Heart right ventricle (tissue), 16 donors: ENCODE measurements at regions of chr20 and their contacts with region 1.

Region 1: DNA sequence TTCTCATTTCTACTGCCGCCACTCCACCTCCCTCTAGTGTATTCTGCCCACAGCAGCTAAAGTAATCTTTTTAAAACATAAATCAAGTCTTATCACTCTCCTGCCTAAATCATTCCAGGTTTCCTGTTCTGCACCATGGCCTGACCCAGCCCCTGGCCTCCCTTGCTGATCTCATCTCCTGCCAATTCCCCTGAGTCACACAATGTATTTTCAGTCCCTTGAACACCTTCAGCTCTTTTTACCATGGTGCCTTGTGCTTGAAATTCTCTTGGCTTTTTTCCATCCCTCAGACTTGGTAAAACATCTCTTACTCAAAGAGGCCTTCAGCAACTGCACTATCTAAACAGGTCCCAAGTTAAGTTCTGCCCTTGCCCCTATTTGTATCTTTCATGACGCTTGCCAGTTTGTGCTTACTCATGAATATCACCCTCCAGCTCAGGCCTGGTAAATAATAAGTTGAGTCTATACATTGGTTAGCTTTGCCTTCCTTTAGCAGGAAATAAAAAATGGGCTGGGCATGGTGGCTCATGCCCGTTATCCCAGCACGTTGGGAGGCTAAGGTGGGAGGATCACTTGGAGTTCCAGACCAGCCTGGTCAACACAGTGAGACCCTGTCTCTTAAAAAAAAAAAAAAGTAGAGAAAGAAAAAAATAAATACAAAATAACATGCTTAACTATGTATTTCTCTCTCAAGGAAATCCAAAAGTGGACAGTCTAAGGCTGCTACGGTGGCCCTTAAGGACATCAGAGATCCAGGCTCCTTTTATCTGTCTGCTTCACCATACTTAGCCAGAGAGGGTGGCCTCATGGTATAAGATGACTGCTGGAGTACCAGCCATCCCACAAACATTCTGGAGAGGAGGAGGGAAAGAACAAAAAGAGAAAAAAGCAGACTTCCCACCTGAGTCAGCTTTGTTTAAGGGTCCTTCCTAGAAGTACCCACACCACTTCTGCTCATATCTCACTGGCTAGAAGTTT is 62.2 kb downstream of the ARFGEF2 start:
- DNase-seq: peak; percentile 20 to 41
- ATAC-seq: peak; percentile 82 to 98 (median 96)
- H3K4me3 ChIP-seq: no peak overlapping the region
- H3K27ac ChIP-seq: peak overlapping the region in 9 of 10 donors; percentile 14 to 74 (median 42)
- H3K4me1 ChIP-seq: peaks cover 0 to 37% (median 14%) of the 10 kb centered on the region in 9 donors
- H3K27me3 ChIP-seq: no peaks in the 10 kb centered on the region
- CTCF ChIP-seq: peak in 1 of 9 donors; percentile 11

Region 2: GRCh38 chr20:48921151-48921898 is 62.4 kb before region 1 on chr20 and contains the start of gene ARFGEF2:
- intact Hi-C with region 1: loop called in 1 of 10 experiments (anchors 5 kb)
- DNase-seq: peak; percentile 89 to 91
- ATAC-seq: peak; percentile 90 to 96 (median 96)
- H3K4me3 ChIP-seq: peak within 1 kb of the TSS; percentile 46 to 98 (median 96)
- H3K27ac ChIP-seq: peak within 1 kb of the TSS; percentile 89 to 100 (median 96)
- H3K4me1 ChIP-seq: peaks cover 3 to 53% (median 48%) of the 10 kb centered on the region in 9 donors
- H3K27me3 ChIP-seq: no peaks in the 10 kb centered on the region
- CTCF ChIP-seq: peak in 3 of 9 donors; percentile 16 to 19 (median 19)
- total RNA-seq, gene ARFGEF2: 34.1 to 50.0 (median 42.2) TPM